Naive thymus-derived CD4-positive, alpha-beta T cell (primary cell): ENCODE measurements at regions of chr11 and their contacts with region 1.

Region 1: GRCh38 chr11:62805076-62805892 is at the start of gene NXF1:
- DNase-seq: peak; percentile 91 to 99 (median 97)
- ATAC-seq: peak; percentile 92
- H3K4me3 ChIP-seq: peak within 1 kb of the TSS; percentile 87
- H3K4me3 Mint-ChIP-seq: peak within 1 kb of the TSS; percentile 90 to 100 (median 99)
- H3K27ac ChIP-seq: peak within 1 kb of the TSS; percentile 97
- H3K27ac Mint-ChIP-seq: peak within 1 kb of the TSS; percentile 95 to 100 (median 99)
- H3K4me1 ChIP-seq: peaks cover 13 to 18% of the 10 kb centered on the region in 2 donors
- H3K4me1 Mint-ChIP-seq: peaks cover 17 to 55% (median 34%) of the 10 kb centered on the region in 7 donors
- H3K27me3 ChIP-seq: no peaks in the 10 kb centered on the region
- H3K27me3 Mint-ChIP-seq: peaks cover 0 to 2% (median 0%) of the 10 kb centered on the region in 5 donors
- total RNA-seq, gene NXF1: 92.1 to 421 (median 195) TPM

Region 2: DNA sequence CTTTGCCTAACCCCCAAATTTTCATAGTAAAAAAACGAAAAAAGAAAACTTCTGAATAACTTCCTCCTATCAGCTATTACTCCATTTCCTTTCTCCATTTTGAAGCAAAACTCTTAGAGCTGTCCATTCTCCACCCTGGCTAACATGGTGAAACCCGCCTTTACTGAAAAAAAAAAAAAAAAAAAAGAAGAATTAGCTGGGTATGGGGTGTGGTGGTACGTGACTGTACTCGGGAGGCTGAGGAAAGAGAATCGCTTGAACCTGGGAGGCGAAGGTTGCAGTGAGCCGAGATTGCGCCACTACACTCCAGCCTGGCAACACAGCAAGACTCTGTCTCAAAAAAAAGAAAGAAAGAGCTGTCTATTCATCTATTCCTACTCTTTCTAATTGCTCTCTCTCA is 11.3 kb after region 1 on chr11:
- CTCF ChIA-PET with region 1: no interaction called
- POLR2A ChIA-PET with region 1: interaction called, 17 read pairs
- intact Hi-C with region 1: no loop called
- DNase-seq: no peak
- ATAC-seq: peak; percentile 77
- H3K4me3 ChIP-seq: no peak overlapping the region
- H3K4me3 Mint-ChIP-seq: no peak overlapping the region
- H3K27ac ChIP-seq: no peak overlapping the region
- H3K27ac Mint-ChIP-seq: peak overlapping the region in 1 of 9 donors; percentile 8
- H3K4me1 ChIP-seq: no peaks in the 10 kb centered on the region
- H3K4me1 Mint-ChIP-seq: peaks cover 0 to 9% (median 0%) of the 10 kb centered on the region in 7 donors
- H3K27me3 ChIP-seq: no peaks in the 10 kb centered on the region
- H3K27me3 Mint-ChIP-seq: no peaks in the 10 kb centered on the region

Region 3: GRCh38 chr11:63023841-63024648 is 218.8 kb after region 1 on chr11:
- CTCF ChIA-PET with region 1: no interaction called
- POLR2A ChIA-PET with region 1: no interaction called
- intact Hi-C with region 1: no loop called
- DNase-seq: peak; percentile 51 to 86 (median 72)
- ATAC-seq: peak; percentile 98
- H3K4me3 ChIP-seq: no peak overlapping the region
- H3K4me3 Mint-ChIP-seq: peak overlapping the region in 1 of 10 donors; percentile 12
- H3K27ac ChIP-seq: no peak overlapping the region
- H3K27ac Mint-ChIP-seq: no peak overlapping the region
- H3K4me1 ChIP-seq: no peaks in the 10 kb centered on the region
- H3K4me1 Mint-ChIP-seq: peaks cover 0 to 6% (median 4%) of the 10 kb centered on the region in 7 donors
- H3K27me3 ChIP-seq: no peaks in the 10 kb centered on the region
- H3K27me3 Mint-ChIP-seq: peaks cover 5 to 28% (median 19%) of the 10 kb centered on the region in 5 donors